ENCODE measurements at regions of chr14 and their contacts with region 1.

Region 1: DNA sequence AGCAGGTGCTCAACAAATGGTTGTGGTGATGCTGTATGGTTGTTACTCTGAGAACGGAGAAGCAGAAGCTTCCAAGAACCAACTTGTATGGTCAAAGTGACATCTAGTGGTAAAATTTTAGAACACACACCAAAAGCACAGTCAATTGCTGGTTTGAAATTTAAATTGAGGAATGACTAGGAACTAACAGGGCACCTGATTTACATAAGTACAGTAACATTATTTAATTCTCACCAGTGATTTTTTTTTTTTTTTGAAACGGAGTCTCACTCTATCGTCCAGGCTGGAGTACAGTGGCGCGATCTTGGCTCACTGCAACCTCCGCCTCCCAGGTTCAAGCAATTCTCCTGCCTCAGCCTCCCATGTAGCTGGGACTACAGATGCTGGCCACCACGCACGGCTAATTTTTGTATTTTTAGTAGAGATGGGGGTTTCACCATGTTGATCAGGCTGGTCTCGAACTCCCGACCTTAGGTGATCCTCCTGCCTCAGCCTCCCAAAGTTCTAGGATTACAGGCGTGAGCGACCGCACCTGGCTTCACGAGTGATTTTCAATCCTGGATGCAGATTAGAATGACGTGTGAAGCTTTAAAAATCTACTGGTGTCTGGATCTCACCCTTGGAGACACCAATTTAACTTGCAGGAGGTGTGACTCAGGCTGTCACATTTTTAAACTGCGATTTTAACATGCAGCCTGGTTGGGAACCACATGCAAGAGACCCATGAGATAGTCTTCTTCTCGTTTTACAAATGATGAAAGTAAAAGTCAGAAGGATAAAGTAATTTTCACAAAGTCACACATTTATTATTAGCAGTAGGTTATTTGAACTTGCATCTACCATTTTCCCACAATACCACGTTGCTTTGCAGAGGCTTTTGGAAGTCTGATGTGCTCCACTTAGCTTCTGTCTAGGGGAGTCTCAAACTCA is 14.1 kb upstream of the NUMB start:
- DNase-seq: no peak
- H3K4me3 ChIP-seq: no peak overlapping the region
- H3K27ac ChIP-seq: no peak overlapping the region
- H3K4me1 ChIP-seq: no peaks in the 10 kb centered on the region
- H3K27me3 ChIP-seq: no peaks in the 10 kb centered on the region
- CTCF ChIP-seq: peak; percentile 60 to 70 (median 66)
- EP300 ChIP-seq: no peak
- POLR2A ChIP-seq: no peak

Region 2: GRCh38 chr14:73168274-73168673 is 304.2 kb before region 1 on chr14:
- intact Hi-C with region 1: loop called (anchors 2 kb)
- DNase-seq: no peak
- H3K4me3 ChIP-seq: no peak overlapping the region
- H3K27ac ChIP-seq: no peak overlapping the region
- H3K4me1 ChIP-seq: no peaks in the 10 kb centered on the region
- H3K27me3 ChIP-seq: no peaks in the 10 kb centered on the region
- CTCF ChIP-seq: no peak
- EP300 ChIP-seq: no peak
- POLR2A ChIP-seq: no peak

Region 3: DNA sequence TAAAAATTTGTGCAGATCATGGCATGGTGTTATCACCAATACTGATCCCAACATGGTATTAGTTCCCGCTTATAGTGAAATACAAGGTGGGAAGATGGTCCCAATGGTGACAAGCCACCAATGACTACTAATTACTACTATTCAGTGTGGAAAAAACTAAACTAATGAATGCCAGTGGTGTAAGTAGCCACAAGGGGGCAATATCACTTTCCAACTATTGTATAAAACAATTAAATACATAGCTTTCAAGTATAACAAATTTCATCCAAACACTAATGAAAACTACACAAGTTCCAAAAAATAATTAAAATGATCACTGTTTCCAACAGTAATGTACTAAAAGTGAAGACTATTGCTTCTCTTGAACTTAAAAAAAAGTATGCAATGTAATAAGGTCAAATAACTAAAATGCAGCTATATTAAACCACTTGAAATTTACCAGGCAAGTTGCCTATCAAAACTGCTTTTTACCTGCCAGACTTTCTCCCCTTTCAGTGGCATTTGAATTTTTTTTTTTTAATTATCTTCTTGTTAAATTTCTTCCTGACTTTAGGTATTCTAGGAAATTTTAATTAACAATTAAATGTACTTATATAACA is 177.2 kb before region 1 on chr14:
- intact Hi-C with region 1: loop called (anchors 1 kb)
- DNase-seq: no peak
- H3K4me3 ChIP-seq: no peak overlapping the region
- H3K27ac ChIP-seq: no peak overlapping the region
- H3K4me1 ChIP-seq: no peaks in the 10 kb centered on the region
- H3K27me3 ChIP-seq: no peaks in the 10 kb centered on the region
- CTCF ChIP-seq: peak; percentile 49 to 68 (median 64)
- EP300 ChIP-seq: no peak
- POLR2A ChIP-seq: no peak

Region 4: GRCh38 chr14:73452341-73453186 is 19.9 kb before region 1 on chr14:
- intact Hi-C with region 1: no loop called
- DNase-seq: no peak
- H3K4me3 ChIP-seq: no peak overlapping the region
- H3K27ac ChIP-seq: no peak overlapping the region
- H3K4me1 ChIP-seq: peaks cover 0 to 44% (median 29%) of the 10 kb centered on the region in 4 donors
- H3K27me3 ChIP-seq: no peaks in the 10 kb centered on the region
- CTCF ChIP-seq: no peak
- EP300 ChIP-seq: no peak
- POLR2A ChIP-seq: no peak

Measured in sigmoid colon (tissue), 7 donors.